Calu3 (cell line): ENCODE measurements at regions of chrX and their contacts with region 1.

Region 1: GRCh38 chrX:154490414-154491083 is at the start of gene SLC10A3:
- DNase-seq: peak; percentile 94
- H3K4me3 Mint-ChIP-seq: peak within 1 kb of the TSS; percentile 80
- H3K27ac Mint-ChIP-seq: peak within 1 kb of the TSS; percentile 83
- H3K4me1 Mint-ChIP-seq: peaks cover 11% of the 10 kb centered on the region
- H3K27me3 Mint-ChIP-seq: no peaks in the 10 kb centered on the region
- CTCF ChIP-seq: no peak
- total RNA-seq, gene SLC10A3: 21.5 and 27.1 TPM in 2 replicates

Region 2: GRCh38 chrX:154409222-154409871 is 81.2 kb before region 1 on chrX and contains the start of gene DNASE1L1:
- CTCF ChIA-PET with region 1: no interaction called
- intact Hi-C with region 1: loop called (anchors 5 kb)
- DNase-seq: peak; percentile 95
- H3K4me3 Mint-ChIP-seq: peak within 1 kb of the TSS; percentile 81
- H3K27ac Mint-ChIP-seq: peak within 1 kb of the TSS; percentile 72
- H3K4me1 Mint-ChIP-seq: peaks cover 19% of the 10 kb centered on the region
- H3K27me3 Mint-ChIP-seq: no peaks in the 10 kb centered on the region
- CTCF ChIP-seq: no peak
- total RNA-seq, gene DNASE1L1: 28.8 and 30.6 TPM in 2 replicates